ENCODE measurements at regions of chr1 and their contacts with region 1.

Region 1: GRCh38 chr1:147172168-147172992 is at the start of gene PRKAB2:
- DNase-seq: peak; percentile 95 to 96
- H3K4me3 ChIP-seq: peak within 1 kb of the TSS; percentile 84 to 94
- H3K27ac ChIP-seq: peak within 1 kb of the TSS; percentile 89
- H3K4me1 ChIP-seq: peaks cover 58% of the 10 kb centered on the region
- H3K27me3 ChIP-seq: no peaks in the 10 kb centered on the region
- CTCF ChIP-seq: peak; percentile 32 to 94 (median 93)
- POLR2A ChIP-seq: peak in 1 of 2 donors; percentile 72
- total RNA-seq, gene PRKAB2: 25.0 TPM

Region 2: GRCh38 chr1:147242439-147243227 is 70.3 kb after region 1 on chr1 and contains the start of gene CHD1L:
- intact Hi-C with region 1: loop called (anchors 1 kb)
- DNase-seq: peak in 1 of 2 donors; percentile 94
- H3K4me3 ChIP-seq: peak within 1 kb of the TSS; percentile 77 to 91
- H3K27ac ChIP-seq: peak within 1 kb of the TSS; percentile 94
- H3K4me1 ChIP-seq: peaks cover 16% of the 10 kb centered on the region
- H3K27me3 ChIP-seq: no peaks in the 10 kb centered on the region
- CTCF ChIP-seq: peak; percentile 76 to 89 (median 80)
- POLR2A ChIP-seq: peak in 1 of 2 donors; percentile 2
- total RNA-seq, gene CHD1L: 22.3 TPM